ENCODE measurements at regions of chr6 and their contacts with region 1.

Region 1: DNA sequence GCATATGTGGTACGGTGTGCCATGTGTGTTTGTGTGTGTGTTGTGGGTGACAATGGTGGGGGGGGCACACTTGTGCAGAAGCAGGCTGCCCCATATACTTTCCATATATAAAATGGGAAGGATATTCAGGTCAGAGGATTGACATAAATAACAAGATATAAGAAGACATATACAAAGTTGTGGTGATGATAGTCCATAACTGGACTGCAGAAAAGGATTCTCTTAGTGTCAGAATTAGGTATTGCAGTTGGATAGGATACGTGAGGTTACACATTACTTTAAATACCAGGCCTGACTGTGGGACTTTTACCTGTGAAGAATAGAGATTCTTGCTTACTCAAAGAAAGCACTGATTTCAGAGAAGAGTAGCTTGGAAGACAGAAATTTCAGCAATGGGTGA is 1260.3 kb downstream of the EPHA7 start:
- DNase-seq: no peak
- H3K4me3 ChIP-seq: no peak overlapping the region
- H3K27ac ChIP-seq: no peak overlapping the region
- H3K4me1 ChIP-seq: no peaks in the 10 kb centered on the region
- H3K27me3 ChIP-seq: no peaks in the 10 kb centered on the region
- CTCF ChIP-seq: no peak
- EP300 ChIP-seq: no peak
- POLR2A ChIP-seq: no peak
- RAD21 ChIP-seq: no peak

Region 2: GRCh38 chr6:92122746-92123145 is 36.3 kb before region 1 on chr6:
- CTCF ChIA-PET with region 1: no interaction called
- POLR2A ChIA-PET with region 1: no interaction called
- DNase-seq: no peak
- H3K4me3 ChIP-seq: no peak overlapping the region
- H3K27ac ChIP-seq: no peak overlapping the region
- H3K4me1 ChIP-seq: peaks cover 0 to 7% (median 1%) of the 10 kb centered on the region in 4 experiments; a peak in 2 of 7 replicates
- H3K27me3 ChIP-seq: peaks cover 0 to 1% (median 0%) of the 10 kb centered on the region in 4 experiments; a peak in 1 of 7 replicates
- CTCF ChIP-seq: peak in 2 of 3 experiments; percentile 17 to 28; a peak in 2 of 4 replicates
- EP300 ChIP-seq: no peak
- POLR2A ChIP-seq: no peak
- RAD21 ChIP-seq: peak; percentile 52 to 59

Region 3: GRCh38 chr6:92147246-92147645 is 11.8 kb before region 1 on chr6:
- CTCF ChIA-PET with region 1: interaction called, 13 read pairs
- POLR2A ChIA-PET with region 1: no interaction called
- DNase-seq: no peak
- H3K4me3 ChIP-seq: no peak overlapping the region
- H3K27ac ChIP-seq: no peak overlapping the region
- H3K4me1 ChIP-seq: no peaks in the 10 kb centered on the region
- H3K27me3 ChIP-seq: no peaks in the 10 kb centered on the region
- CTCF ChIP-seq: no peak
- EP300 ChIP-seq: no peak
- POLR2A ChIP-seq: no peak
- RAD21 ChIP-seq: no peak

Measured in H1 (cell line).